OCI-LY7 (cell line): ENCODE measurements at regions of chr1 and their contacts with region 1.

Region 1: DNA sequence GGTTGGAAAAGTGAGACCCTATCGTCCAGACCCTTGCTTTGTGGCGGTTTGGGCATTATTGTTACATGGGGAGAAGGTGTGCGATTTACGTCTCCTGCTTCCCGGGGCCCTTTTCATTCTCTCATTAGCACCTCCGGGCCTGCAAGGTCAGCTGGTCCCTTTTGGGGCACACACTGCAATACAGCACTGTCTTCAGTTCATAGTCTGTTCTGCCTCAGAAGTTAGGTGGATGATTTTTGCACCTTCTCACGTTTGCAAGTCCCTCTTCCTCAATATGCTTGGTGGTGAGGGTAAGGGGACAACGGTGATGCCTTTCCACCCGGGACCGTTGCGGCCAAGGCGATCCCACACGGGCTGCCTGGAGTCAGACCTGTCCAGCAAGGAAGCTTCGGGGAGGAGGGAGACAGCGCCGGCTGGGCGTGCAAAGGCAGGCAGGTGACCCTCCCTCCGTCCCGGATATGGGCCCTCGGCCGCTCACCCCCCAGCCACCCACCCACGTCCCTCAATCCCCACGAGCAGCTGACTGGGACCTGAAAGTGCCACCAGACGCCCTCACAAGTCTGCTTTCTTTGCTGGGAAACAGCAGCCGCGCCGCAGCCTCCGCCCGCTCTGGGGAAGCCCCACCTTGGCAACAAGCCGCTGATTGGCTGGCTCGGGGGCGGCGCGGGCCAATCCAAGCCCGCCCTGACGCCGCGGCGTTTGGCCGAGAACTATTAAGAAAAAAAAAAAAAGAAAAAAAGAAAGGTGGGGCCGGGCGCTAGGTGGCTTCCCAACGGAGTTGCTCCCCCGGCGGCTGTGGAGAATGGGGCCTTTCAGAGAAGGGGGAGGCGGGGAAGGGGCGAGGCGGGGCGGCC is 21.7 kb downstream of the BTG2 start:
- DNase-seq: peak; percentile 96
- H3K4me3 ChIP-seq: peak overlapping the region; percentile 67
- H3K27ac ChIP-seq: peak overlapping the region; percentile 98
- H3K4me1 ChIP-seq: peaks cover 90% of the 10 kb centered on the region
- CTCF ChIP-seq: no peak

Region 2: DNA sequence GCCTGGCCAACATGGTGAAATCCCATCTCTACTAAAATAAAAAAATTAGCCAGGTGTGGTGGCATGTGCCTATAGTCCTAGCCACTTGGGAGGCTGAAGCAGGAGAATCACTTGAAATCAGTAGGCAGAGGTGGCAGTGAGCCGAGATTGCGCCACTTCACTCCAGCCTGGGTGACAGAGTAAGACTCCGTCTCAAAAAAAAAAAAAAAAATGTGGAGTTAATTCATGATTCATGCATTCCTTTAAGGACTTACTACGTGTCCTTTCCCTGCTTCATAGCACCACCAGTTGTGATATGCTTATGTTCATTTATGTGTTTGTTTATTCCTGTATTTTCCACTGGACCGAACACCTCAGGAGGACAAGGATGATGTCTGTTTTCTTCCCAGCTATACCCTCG is 135.8 kb after region 1 on chr1:
- CTCF ChIA-PET with region 1: no interaction called
- POLR2A ChIA-PET with region 1: no interaction called
- intact Hi-C with region 1: no loop called
- DNase-seq: no peak
- H3K4me3 ChIP-seq: no peak overlapping the region
- H3K27ac ChIP-seq: no peak overlapping the region
- H3K4me1 ChIP-seq: peaks cover 67% of the 10 kb centered on the region
- CTCF ChIP-seq: no peak

Region 3: DNA sequence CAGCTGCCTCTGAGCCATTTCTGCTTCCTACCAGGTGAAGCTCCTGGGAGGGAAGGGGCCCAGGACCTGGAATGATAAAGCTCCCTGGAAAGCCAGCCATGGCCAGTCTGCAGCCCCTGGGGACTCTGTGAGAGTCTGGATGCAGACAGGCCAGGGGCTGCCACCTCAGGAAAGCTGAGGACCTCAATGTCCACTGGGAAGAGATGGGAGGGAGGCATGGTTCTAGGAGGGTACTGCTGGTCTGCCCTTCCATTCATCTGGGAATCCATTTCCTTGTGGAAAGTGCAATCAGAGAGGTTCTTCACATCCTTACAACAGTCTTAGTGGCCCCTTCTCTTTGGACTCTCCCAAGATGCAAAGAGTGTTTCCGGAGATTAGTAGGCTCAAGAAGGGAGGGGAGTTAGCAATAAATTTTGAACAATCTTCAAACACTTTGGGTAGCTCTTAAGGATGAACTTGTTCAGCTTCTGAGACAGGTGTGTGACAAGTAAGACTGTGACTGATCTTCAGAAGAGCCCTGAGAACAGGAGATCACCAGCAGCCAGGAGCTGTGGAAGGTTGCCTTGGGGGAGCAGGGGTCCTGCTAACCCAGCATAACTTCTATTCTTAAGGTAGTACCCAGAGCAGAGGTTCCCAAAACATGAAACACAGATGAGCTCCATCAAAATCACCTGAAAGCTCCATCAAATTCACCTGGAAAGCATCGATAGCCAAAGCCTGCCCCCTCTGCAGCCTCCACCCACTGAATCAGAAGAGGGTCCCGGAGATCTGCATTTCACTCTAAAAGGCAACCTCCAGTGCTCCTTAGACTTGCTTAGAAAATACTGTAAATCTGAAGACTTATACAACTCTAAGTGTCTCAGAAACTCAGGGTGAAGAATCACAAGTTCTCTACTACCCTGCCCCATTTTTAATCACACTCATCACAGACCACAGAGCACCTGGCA is 437.3 kb after region 1 on chr1:
- CTCF ChIA-PET with region 1: no interaction called
- POLR2A ChIA-PET with region 1: no interaction called
- intact Hi-C with region 1: loop called (anchors 1 kb)
- DNase-seq: peak; percentile 59
- H3K4me3 ChIP-seq: peak overlapping the region; percentile 81
- H3K27ac ChIP-seq: peak overlapping the region; percentile 98
- H3K4me1 ChIP-seq: peaks cover 62% of the 10 kb centered on the region
- CTCF ChIP-seq: no peak

Region 4: DNA sequence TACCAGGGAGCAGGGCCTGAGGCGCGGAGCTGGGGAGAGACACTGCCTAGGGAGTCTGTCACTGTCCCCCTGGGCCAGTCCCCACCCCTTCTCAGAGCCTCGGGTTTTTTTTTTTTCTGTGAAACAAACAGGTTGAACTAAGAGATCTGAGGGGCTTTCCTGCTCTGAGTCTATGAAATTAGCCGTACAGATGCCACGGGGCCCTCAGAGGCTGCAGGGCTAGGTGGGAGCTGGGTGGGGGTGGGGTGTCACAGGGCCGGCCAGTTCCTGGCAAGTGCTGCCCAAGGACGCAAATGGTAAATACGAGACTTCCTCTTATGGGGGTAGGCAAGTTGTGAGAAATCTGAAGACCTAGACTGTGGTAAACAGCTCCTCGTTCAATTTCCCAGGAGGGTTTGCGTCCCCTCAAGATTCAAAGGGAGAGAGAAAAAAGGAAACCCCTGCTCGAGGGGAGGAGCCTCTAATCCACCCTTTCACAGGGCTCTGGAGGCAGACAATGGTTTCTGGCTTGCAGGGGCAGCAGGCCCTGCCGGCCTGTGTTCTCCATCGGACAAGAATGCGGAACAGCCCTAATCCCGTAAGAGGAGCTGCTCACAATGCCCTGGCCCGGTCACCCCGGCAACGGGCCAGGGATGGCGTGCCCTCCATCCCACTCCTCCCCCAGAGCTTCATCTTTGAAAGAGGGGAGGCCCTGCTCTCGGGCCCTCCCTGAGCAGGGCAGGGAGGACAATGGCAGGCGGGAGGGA is 1986.7 kb after region 1 on chr1:
- CTCF ChIA-PET with region 1: no interaction called
- POLR2A ChIA-PET with region 1: no interaction called
- intact Hi-C with region 1: loop called (anchors 10 kb)
- DNase-seq: peak; percentile 76
- H3K4me3 ChIP-seq: peak overlapping the region; percentile 60
- H3K27ac ChIP-seq: peak overlapping the region; percentile 66
- H3K4me1 ChIP-seq: peaks cover 83% of the 10 kb centered on the region
- CTCF ChIP-seq: no peak